CD8-positive, alpha-beta T cell (primary cell): ENCODE measurements at regions of chr6 and their contacts with region 1.

Region 1: DNA sequence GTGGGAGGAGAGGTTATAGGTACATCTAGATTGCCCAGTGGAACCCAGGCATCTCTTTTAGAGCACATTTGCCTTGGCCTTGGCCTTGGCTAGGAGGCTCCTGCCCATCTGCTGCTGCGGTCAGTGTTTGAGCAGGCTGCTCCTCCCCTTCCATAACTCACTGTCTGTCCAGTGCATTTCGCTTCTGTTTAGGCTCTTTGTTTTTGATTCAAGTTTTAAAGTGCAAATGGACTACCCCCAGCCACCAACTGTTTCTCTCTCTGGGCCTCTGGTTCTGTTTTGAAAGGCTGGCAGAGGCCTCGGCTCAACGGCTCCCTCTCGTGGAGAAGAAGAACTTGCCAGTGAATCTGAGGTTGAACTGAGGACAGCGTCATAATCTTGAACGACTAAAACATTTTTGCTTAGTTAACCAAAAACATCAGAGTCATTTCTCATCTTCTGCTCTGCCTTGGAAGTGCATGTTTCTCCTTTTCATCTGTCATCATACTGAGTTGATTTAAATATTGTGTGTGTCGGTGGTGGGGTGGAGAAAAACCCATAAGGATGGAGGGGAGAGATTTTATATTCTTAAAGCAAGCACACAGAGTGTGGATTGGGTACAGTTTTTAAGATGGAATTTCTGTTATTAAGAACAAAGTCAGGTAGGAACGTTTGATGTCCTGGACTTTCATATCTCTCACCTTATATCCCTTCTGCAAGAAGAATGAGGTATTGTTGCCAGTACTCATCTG is 171.4 kb downstream of the DTNBP1 start:
- DNase-seq: peak; percentile 49 to 80 (median 68)
- ATAC-seq: peak; percentile 89
- H3K4me3 ChIP-seq: no peak overlapping the region
- H3K4me3 Mint-ChIP-seq: no peak overlapping the region
- H3K27ac ChIP-seq: no peak overlapping the region
- H3K27ac Mint-ChIP-seq: peak overlapping the region; percentile 2
- H3K4me1 ChIP-seq: peaks cover 12% of the 10 kb centered on the region
- H3K4me1 Mint-ChIP-seq: peaks cover 40% of the 10 kb centered on the region
- H3K27me3 ChIP-seq: no peaks in the 10 kb centered on the region
- H3K27me3 Mint-ChIP-seq: no peaks in the 10 kb centered on the region
- CTCF ChIP-seq: peak; percentile 92

Region 2: DNA sequence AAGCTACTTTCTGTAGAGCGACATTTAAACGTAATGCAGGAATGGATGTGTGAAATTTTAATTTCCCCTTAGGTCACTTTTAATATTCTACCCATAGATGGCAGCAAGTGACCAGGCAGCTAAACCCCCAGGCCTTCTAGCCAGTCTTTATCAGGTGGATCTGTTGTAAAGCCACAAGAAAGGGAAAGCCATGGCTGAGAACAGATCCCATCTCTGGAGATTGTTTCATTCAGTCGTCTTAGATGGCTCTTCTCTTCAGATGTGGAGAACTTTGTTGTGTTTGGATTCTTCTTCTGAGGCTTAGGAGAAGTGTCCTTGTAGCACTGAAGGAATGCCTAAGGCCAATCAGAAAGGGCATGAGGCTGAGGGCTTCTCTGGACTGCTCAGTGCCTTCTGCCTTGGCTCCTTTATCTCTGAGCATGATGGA is 1582.5 kb before region 1 on chr6:
- CTCF ChIA-PET with region 1: no interaction called
- POLR2A ChIA-PET with region 1: no interaction called
- intact Hi-C with region 1: loop called in 1 of 2 experiments (anchors 5 kb)
- DNase-seq: peak in 7 of 9 experiments; percentile 6 to 75 (median 32)
- ATAC-seq: peak; percentile 62
- H3K4me3 ChIP-seq: no peak overlapping the region
- H3K4me3 Mint-ChIP-seq: no peak overlapping the region
- H3K27ac ChIP-seq: no peak overlapping the region
- H3K27ac Mint-ChIP-seq: no peak overlapping the region
- H3K4me1 ChIP-seq: no peaks in the 10 kb centered on the region
- H3K4me1 Mint-ChIP-seq: no peaks in the 10 kb centered on the region
- H3K27me3 ChIP-seq: no peaks in the 10 kb centered on the region
- H3K27me3 Mint-ChIP-seq: peaks cover 24% of the 10 kb centered on the region
- CTCF ChIP-seq: peak; percentile 45

Region 3: GRCh38 chr6:14129575-14129974 is 1361.8 kb before region 1 on chr6:
- CTCF ChIA-PET with region 1: interaction called, 5 read pairs
- POLR2A ChIA-PET with region 1: no interaction called
- intact Hi-C with region 1: loop called (anchors 1 to 2 kb)
- DNase-seq: peak in 7 of 9 experiments; percentile 11 to 66 (median 38)
- ATAC-seq: peak; percentile 55
- H3K4me3 ChIP-seq: no peak overlapping the region
- H3K4me3 Mint-ChIP-seq: no peak overlapping the region
- H3K27ac ChIP-seq: no peak overlapping the region
- H3K27ac Mint-ChIP-seq: no peak overlapping the region
- H3K4me1 ChIP-seq: no peaks in the 10 kb centered on the region
- H3K4me1 Mint-ChIP-seq: peaks cover 11% of the 10 kb centered on the region
- H3K27me3 ChIP-seq: no peaks in the 10 kb centered on the region
- H3K27me3 Mint-ChIP-seq: no peaks in the 10 kb centered on the region
- CTCF ChIP-seq: no peak

Region 4: DNA sequence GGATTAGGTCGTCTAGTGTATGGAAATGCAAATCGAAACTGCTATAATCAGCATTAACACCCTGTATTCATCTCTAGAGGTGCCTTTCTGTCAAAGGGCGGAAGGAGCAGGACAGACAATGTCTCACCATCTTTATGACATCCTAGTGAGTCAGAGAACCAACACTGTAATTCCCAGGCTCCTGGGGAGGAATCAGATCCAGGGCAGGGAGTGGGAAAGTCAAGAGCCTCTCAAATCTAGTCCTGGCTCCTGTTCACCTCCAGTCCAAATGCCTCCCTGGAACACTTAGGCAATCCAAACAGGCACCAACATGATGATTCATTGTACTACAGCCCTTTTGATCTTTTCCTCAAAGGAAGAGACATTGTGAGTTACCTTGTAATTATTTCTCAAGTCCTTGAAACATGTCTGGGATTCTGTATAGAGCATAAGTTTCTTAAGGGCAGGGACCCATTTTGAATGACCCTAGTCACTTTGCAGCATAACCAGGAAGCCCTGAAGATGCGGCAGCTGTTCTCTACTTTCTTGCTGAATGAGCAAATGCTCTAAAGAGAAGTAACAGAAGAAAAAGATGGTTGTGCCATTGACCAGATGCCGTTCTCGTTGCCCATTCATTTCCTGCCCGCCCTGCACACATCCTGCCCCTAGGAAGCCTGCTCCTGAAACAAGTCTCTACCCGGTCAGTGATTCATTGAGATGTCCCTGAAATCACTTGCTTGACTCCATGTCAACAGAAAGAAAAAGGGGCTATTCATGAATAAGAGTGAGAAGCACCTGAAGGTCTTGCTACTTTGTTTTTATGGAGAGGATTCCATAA is 358.4 kb before region 1 on chr6:
- CTCF ChIA-PET with region 1: no interaction called
- POLR2A ChIA-PET with region 1: no interaction called
- intact Hi-C with region 1: no loop called
- DNase-seq: no peak
- ATAC-seq: no peak
- H3K4me3 ChIP-seq: no peak overlapping the region
- H3K4me3 Mint-ChIP-seq: no peak overlapping the region
- H3K27ac ChIP-seq: no peak overlapping the region
- H3K27ac Mint-ChIP-seq: no peak overlapping the region
- H3K4me1 ChIP-seq: no peaks in the 10 kb centered on the region
- H3K4me1 Mint-ChIP-seq: no peaks in the 10 kb centered on the region
- H3K27me3 ChIP-seq: no peaks in the 10 kb centered on the region
- H3K27me3 Mint-ChIP-seq: no peaks in the 10 kb centered on the region
- CTCF ChIP-seq: no peak

Region 5: DNA sequence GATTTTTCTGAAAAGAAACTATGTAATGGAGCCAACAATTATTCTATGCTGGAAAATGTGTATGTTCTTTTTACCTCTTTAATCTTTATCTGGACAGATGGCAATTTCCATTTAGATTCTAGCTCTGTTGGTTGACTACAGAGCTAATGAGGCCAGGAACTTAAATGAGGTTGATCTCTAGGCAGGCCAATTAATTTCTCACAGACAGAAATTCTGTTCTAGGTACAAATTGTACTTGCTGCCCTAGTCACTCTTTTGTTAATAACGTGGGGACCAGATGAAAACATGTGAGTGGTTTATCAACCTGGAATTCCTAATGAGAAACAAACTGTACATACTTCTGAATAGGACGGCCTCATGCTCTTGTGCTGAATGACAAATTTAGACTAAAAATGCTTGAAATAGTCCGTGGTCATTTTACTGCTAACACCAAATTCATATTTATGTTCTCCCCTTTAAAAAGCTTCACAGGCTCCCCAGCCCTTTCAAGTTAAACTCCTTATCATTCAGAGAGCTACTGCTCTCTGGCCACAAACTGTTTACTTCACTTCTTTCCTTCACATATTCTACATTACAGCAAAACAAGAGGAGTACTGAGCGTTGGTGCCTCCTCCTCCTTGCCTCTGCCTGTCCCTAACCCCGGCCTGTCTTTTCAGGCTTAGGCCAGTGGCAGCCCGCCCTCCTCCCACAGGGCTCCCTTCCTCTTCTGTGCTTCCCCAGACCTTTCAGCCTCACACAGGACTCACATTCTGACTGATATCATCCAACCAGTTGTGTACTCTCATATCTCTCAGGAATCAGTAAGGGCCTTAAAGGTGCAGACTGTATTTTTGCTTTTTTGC is 130.0 kb after region 1 on chr6:
- CTCF ChIA-PET with region 1: interaction called, 5 read pairs
- POLR2A ChIA-PET with region 1: no interaction called
- intact Hi-C with region 1: loop called (anchors 2 kb)
- DNase-seq: peak in 1 of 9 experiments; percentile 12
- ATAC-seq: no peak
- H3K4me3 ChIP-seq: no peak overlapping the region
- H3K4me3 Mint-ChIP-seq: no peak overlapping the region
- H3K27ac ChIP-seq: no peak overlapping the region
- H3K27ac Mint-ChIP-seq: no peak overlapping the region
- H3K4me1 ChIP-seq: peaks cover 11% of the 10 kb centered on the region
- H3K4me1 Mint-ChIP-seq: peaks cover 47% of the 10 kb centered on the region
- H3K27me3 ChIP-seq: no peaks in the 10 kb centered on the region
- H3K27me3 Mint-ChIP-seq: no peaks in the 10 kb centered on the region
- CTCF ChIP-seq: no peak

Region 6: GRCh38 chr6:16124198-16125180 is 633.1 kb after region 1 on chr6:
- CTCF ChIA-PET with region 1: no interaction called
- POLR2A ChIA-PET with region 1: no interaction called
- intact Hi-C with region 1: no loop called
- DNase-seq: no peak
- ATAC-seq: no peak
- H3K4me3 ChIP-seq: no peak overlapping the region
- H3K4me3 Mint-ChIP-seq: no peak overlapping the region
- H3K27ac ChIP-seq: no peak overlapping the region
- H3K27ac Mint-ChIP-seq: no peak overlapping the region
- H3K4me1 ChIP-seq: no peaks in the 10 kb centered on the region
- H3K4me1 Mint-ChIP-seq: peaks cover 7% of the 10 kb centered on the region
- H3K27me3 ChIP-seq: peaks cover 0 to 2% of the 10 kb centered on the region in 2 experiments
- H3K27me3 Mint-ChIP-seq: peaks cover 2% of the 10 kb centered on the region
- CTCF ChIP-seq: no peak